Activated B cell treated with CpG ODN at 0.5 μM for 24 hours (primary cell): ENCODE measurements at regions of chr3 and their contacts with region 1.

Region 1: DNA sequence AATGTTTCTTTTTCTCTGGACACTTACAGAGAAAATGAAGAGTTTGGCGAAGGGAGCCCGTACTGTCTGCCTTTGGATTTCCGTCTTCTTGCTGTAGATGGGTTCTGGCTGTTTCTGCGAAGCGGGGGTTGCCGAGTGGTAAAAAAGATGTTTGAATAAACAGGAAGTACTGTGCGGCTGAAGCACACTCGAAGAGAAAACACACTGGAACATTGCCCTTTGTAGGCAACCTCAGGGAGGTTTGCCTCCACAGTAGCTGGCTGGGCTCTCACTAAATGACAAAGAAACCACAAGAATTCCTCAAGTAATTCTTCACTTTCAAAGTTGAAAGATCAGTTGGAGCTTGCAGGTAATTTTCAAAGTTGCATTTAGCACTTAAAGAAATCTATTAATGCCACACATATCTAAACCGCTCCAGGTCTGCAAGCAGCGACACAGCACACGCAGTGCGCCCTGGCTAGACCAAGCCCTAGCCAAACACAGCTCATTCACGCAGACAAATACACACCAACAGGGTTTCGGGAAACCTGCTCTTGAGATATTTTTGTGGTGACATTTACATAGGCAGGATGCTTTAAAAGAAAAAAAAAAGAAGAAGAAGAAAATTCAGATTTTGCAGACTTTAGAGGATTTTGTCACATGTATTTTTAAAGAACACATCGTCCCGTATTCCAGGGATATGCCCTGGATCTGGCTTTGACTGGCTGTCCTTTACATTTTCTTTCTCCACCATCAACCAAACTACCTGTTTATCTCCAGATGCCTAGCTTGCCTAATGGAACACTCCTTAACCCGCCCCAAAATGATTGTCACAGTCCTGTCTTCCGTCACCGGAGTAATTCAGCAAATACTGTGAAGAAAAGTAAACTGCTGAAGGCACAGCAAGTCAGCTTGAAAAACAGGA is 452.8 kb downstream of the FOXP1 start:
- DNase-seq: no peak
- ATAC-seq: peak; percentile 69
- H3K4me3 Mint-ChIP-seq: peak overlapping the region; percentile 88
- H3K27ac Mint-ChIP-seq: peak overlapping the region; percentile 93
- H3K4me1 Mint-ChIP-seq: peaks cover 79% of the 10 kb centered on the region
- H3K27me3 Mint-ChIP-seq: no peaks in the 10 kb centered on the region
- CTCF ChIP-seq: no peak

Region 2: DNA sequence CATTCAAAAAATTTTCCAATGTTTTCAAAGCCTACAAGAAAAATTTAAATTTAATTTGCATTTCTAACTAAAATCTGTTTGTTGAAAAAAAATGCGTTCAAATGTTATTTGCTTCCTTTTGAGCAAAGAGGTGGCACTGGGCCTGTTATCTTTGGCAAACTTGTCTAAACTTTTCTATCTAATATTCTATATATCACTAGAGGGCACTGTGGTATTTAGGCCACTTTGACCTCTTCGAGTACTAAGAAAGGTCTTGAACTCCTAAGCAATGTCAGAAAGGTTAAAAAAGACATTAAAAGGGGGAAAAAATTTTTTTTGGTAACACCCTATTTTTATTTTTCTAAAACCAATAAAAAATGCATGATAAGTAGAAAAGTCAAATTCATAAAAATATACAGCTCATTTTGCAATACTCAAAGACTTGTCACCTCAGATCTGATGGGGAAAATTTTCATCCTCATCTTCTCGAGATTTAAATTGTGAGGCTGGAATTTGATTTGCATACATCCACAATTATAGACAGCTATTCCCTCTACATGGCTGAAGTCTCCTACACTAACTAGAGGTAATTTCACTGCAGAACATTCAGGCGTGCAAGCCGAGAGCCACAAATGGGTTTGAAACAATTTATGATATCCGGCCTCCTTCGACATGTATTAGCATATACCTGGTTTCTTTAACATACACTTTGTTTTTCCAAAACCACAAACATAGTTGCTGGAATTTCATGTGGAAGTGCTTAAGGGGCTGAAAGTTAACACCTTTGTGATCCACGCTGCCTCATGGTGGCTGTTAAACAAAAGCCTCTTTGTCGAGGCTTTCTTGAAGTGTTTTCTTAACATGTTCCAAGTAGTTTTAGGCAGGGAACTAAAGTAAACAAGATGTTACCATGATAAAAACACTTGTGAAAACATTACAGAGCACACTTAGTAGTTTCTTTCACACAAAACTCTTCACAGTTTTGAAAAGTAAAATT is 123.6 kb before region 1 on chr3:
- CTCF ChIA-PET with region 1: no interaction called
- POLR2A ChIA-PET with region 1: interaction called, 9 read pairs
- intact Hi-C with region 1: loop called (anchors 1 kb)
- DNase-seq: no peak
- ATAC-seq: peak; percentile 35
- H3K4me3 Mint-ChIP-seq: no peak overlapping the region
- H3K27ac Mint-ChIP-seq: peak overlapping the region; percentile 84
- H3K4me1 Mint-ChIP-seq: peaks cover 73% of the 10 kb centered on the region
- H3K27me3 Mint-ChIP-seq: no peaks in the 10 kb centered on the region
- CTCF ChIP-seq: peak; percentile 75

Region 3: DNA sequence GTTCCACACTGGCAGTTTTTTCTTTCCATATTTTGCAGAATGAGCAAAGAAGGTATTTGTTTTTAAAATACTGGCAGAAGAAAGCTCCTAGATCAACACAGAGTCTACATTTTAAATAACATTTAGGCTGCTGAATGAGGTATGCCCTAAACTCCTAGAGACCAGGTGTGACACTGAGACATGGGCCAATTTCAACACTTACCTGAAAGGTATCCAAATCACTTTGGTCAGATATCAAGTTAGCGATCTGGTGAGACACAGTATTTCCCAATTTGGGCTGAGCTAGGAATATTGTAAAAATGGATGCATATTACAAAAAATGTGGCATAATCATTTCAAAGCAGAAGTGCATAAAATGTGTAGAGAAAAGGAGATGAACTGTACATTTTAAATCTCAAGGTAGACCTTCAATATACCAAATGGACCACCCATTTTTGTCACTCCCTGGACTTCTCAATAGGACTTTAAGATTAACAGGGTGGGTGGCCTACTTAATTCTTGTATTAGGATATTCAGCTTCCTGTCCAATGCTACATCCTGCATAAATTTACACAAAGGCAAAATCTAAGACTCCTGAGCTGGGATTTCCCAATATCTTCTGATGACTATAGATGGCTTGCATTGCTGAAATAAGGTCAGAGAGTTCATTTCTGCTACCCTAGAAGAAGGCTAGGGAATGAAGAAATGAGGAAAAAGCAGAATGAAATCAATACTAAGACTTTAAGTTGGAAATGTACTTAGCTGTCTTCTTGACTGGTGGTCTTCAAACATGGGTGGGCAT is 35.0 kb before region 1 on chr3:
- CTCF ChIA-PET with region 1: interaction called, 3 read pairs
- POLR2A ChIA-PET with region 1: interaction called, 339 read pairs
- intact Hi-C with region 1: no loop called
- DNase-seq: no peak
- ATAC-seq: no peak
- H3K4me3 Mint-ChIP-seq: no peak overlapping the region
- H3K27ac Mint-ChIP-seq: peak overlapping the region; percentile 78
- H3K4me1 Mint-ChIP-seq: peaks cover 91% of the 10 kb centered on the region
- H3K27me3 Mint-ChIP-seq: no peaks in the 10 kb centered on the region
- CTCF ChIP-seq: no peak

Region 4: DNA sequence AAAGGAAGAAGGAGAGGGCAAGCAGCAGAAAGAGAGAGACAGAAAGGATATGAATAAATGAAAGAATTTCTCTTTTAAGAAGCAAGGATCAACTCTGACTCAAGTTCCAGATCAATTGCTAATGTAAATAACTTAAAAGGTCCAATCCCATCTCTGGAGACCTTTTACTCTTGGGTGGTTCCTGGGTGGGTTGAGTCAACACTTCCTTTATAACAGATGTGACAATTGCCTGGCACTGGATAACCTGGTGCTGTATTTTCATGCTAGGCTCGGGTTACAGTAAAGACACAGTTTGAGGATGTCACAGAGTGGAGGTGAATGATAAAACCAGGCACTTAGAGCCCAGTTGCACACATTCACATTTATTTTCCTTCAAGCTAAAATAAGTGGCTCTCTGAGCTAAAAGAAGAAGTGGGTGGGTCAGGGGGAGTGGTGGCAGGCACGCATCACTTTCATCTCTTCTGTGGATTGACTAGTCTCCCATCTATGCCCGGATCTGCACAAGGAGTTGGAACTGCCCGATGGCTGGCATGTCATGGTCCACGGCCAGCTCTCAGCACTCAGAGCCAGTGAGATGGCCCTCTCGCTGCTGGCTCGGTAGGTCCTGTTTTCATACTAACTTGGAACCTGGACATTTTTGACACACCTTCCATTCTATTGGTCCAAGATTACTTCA is 13.0 kb before region 1 on chr3:
- CTCF ChIA-PET with region 1: interaction called, 7 read pairs
- POLR2A ChIA-PET with region 1: interaction called, 89 read pairs
- intact Hi-C with region 1: loop called (anchors 1 kb)
- DNase-seq: no peak
- ATAC-seq: peak; percentile 69
- H3K4me3 Mint-ChIP-seq: peak overlapping the region; percentile 64
- H3K27ac Mint-ChIP-seq: peak overlapping the region; percentile 90
- H3K4me1 Mint-ChIP-seq: peaks cover 85% of the 10 kb centered on the region
- H3K27me3 Mint-ChIP-seq: no peaks in the 10 kb centered on the region
- CTCF ChIP-seq: no peak

Region 5: GRCh38 chr3:71185733-71186455 is 55.2 kb after region 1 on chr3:
- CTCF ChIA-PET with region 1: no interaction called
- POLR2A ChIA-PET with region 1: interaction called, 10 read pairs
- intact Hi-C with region 1: no loop called
- DNase-seq: no peak
- ATAC-seq: peak; percentile 65
- H3K4me3 Mint-ChIP-seq: no peak overlapping the region
- H3K27ac Mint-ChIP-seq: peak overlapping the region; percentile 28
- H3K4me1 Mint-ChIP-seq: peaks cover 57% of the 10 kb centered on the region
- H3K27me3 Mint-ChIP-seq: no peaks in the 10 kb centered on the region
- CTCF ChIP-seq: no peak

Region 6: GRCh38 chr3:71197841-71198565 is 67.3 kb after region 1 on chr3:
- CTCF ChIA-PET with region 1: no interaction called
- POLR2A ChIA-PET with region 1: no interaction called
- intact Hi-C with region 1: no loop called
- DNase-seq: no peak
- ATAC-seq: no peak
- H3K4me3 Mint-ChIP-seq: no peak overlapping the region
- H3K27ac Mint-ChIP-seq: peak overlapping the region; percentile 6
- H3K4me1 Mint-ChIP-seq: peaks cover 23% of the 10 kb centered on the region
- H3K27me3 Mint-ChIP-seq: no peaks in the 10 kb centered on the region
- CTCF ChIP-seq: no peak

Region 7: GRCh38 chr3:71339049-71339448 is 208.3 kb after region 1 on chr3:
- CTCF ChIA-PET with region 1: no interaction called
- POLR2A ChIA-PET with region 1: no interaction called
- intact Hi-C with region 1: no loop called
- DNase-seq: no peak
- ATAC-seq: no peak
- H3K4me3 Mint-ChIP-seq: no peak overlapping the region
- H3K27ac Mint-ChIP-seq: peak overlapping the region; percentile 22
- H3K4me1 Mint-ChIP-seq: peaks cover 22% of the 10 kb centered on the region
- H3K27me3 Mint-ChIP-seq: no peaks in the 10 kb centered on the region
- CTCF ChIP-seq: no peak

Region 8: GRCh38 chr3:71360764-71361163 is 230.0 kb after region 1 on chr3:
- CTCF ChIA-PET with region 1: no interaction called
- POLR2A ChIA-PET with region 1: interaction called, 19 read pairs
- intact Hi-C with region 1: no loop called
- DNase-seq: no peak
- ATAC-seq: peak; percentile 62
- H3K4me3 Mint-ChIP-seq: peak overlapping the region; percentile 81
- H3K27ac Mint-ChIP-seq: peak overlapping the region; percentile 93
- H3K4me1 Mint-ChIP-seq: peaks cover 88% of the 10 kb centered on the region
- H3K27me3 Mint-ChIP-seq: no peaks in the 10 kb centered on the region
- CTCF ChIP-seq: no peak

Region 9: DNA sequence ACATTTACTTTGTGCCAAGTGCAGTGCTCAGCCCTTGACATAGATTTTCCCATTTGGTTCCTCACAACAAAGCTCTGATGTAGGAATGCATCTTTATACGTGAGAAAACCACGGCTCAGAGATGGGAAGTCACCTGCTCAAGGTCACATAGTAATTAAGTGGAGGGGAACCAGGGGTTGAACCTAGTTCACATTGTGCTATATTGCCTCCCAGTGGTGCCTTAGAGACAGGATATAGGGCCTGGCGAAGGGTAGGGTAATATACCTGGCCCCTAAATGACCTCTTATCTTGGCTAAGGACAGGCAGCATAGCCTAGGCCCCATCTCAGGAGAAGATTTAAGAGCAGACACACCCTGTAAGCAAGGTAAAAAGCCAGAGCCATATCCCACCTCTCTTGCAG is 381.3 kb after region 1 on chr3:
- CTCF ChIA-PET with region 1: no interaction called
- POLR2A ChIA-PET with region 1: interaction called, 5 read pairs
- intact Hi-C with region 1: loop called (anchors 5 kb)
- DNase-seq: no peak
- ATAC-seq: peak; percentile 97
- H3K4me3 Mint-ChIP-seq: peak overlapping the region; percentile 5
- H3K27ac Mint-ChIP-seq: no peak overlapping the region
- H3K4me1 Mint-ChIP-seq: peaks cover 22% of the 10 kb centered on the region
- H3K27me3 Mint-ChIP-seq: no peaks in the 10 kb centered on the region
- CTCF ChIP-seq: no peak